ENCODE measurements at regions of chr2 and their contacts with region 1.

Region 1: DNA sequence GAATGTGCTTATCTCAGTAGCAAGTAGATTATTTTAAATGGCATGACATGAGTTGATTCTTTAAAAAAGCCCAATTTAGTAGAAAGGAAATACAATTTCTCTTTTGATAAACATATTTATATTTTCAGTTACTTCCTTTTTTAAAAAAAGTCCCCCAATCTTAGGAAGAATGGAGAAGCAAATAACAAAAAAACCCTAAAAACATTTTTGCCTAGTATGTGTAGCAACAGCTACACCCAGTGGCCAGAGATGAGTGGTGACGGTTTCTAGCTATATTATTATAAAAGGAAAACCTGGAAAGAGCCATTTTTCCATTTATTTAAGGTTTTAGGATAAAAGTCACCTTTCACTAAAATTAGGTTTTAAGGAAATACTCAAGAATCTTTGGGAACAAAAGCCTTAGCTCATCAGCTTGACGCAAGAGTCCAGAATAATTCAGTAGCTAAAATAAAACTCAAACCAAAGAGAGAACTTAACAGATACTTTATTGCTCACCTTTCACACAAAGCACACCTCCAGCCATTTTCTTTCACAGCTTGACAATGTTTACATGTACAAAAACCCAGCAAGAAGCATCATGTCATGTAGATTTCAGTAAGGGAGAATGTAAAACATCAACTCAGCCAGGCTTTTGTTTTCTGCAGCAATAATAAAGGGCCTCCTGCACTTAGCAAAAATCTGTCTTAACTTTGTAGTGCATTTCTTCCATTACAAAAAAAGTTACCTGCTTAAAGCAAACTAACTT is 15.7 kb downstream of the FAM98A start:
- DNase-seq: peak; percentile 26
- ATAC-seq: peak; percentile 73
- H3K4me3 ChIP-seq: no peak overlapping the region
- H3K27ac ChIP-seq: 0 out of 2 replicates have a peak overlapping the region, but pooled peaks have one; percentile 6
- H3K4me1 ChIP-seq: peaks cover 3% of the 10 kb centered on the region; the same call in 1 of the 2 replicates
- H3K27me3 ChIP-seq: no peaks in the 10 kb centered on the region
- CTCF ChIP-seq: peak; percentile 72 to 85 (median 83)
- EP300 ChIP-seq: no peak
- POLR2A ChIP-seq: no peak
- RAD21 ChIP-seq: peak; percentile 96

Region 2: GRCh38 chr2:32946314-32947075 is 636.9 kb before region 1 on chr2 and contains the start of gene LTBP1:
- CTCF ChIA-PET with region 1: no interaction called
- POLR2A ChIA-PET with region 1: no interaction called
- RAD21 ChIA-PET with region 1: no interaction called
- SMC1A ChIA-PET with region 1: no interaction called
- in situ Hi-C with region 1: no loop called
- intact Hi-C with region 1: loop called (anchors 10 kb)
- DNase-seq: no peak
- ATAC-seq: peak; percentile 94
- H3K4me3 ChIP-seq: peak within 1 kb of the TSS; percentile 65
- H3K27ac ChIP-seq: no peak within 1 kb of the TSS
- H3K4me1 ChIP-seq: peaks cover 4% of the 10 kb centered on the region; the same call in 1 of the 2 replicates
- H3K27me3 ChIP-seq: peaks cover 0 to 6% of the 10 kb centered on the region in 2 experiments
- CTCF ChIP-seq: peak; percentile 64 to 81 (median 73)
- EP300 ChIP-seq: no peak
- POLR2A ChIP-seq: no peak
- RAD21 ChIP-seq: peak; percentile 60
- polyA plus RNA-seq, gene LTBP1: not detected

Region 3: DNA sequence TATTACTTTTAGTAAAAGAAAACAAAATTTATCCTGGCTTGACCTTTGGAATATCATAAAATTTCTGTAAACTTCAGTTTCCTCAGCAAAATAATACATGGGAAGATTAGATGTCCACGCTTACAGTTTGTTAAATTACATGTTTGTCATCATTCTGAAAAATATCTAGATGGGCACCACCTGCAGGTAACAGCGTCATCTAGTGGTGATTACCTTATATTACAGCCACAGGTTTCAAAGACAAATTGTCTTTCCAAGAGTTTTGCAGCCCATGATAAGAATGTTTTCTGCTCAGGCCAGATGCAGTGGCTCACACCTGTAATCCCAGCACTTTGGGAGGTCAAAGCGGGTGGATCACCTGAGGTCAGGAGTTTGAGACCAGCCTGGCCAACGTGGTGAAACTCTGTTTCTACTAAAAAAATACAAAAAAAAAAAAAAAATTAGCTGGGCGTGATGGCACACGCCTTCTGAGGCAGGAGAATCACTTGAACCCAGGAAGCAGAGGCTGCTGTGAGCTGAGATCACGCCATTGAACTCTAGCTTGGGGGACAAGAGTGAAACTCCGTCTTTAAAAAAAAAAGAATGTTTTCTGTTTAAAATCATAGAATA is 203.3 kb before region 1 on chr2:
- CTCF ChIA-PET with region 1: interaction called, 33 read pairs
- POLR2A ChIA-PET with region 1: no interaction called
- RAD21 ChIA-PET with region 1: interaction called, 13 read pairs
- SMC1A ChIA-PET with region 1: interaction called, 32 read pairs
- in situ Hi-C with region 1: no loop called
- intact Hi-C with region 1: loop called (anchors 10 kb)
- DNase-seq: no peak
- ATAC-seq: no peak
- H3K4me3 ChIP-seq: no peak overlapping the region
- H3K27ac ChIP-seq: no peak overlapping the region
- H3K4me1 ChIP-seq: no peaks in the 10 kb centered on the region
- H3K27me3 ChIP-seq: no peaks in the 10 kb centered on the region; a peak in 1 of 4 replicates
- CTCF ChIP-seq: peak; percentile 55 to 70 (median 61); a peak in 5 of 6 replicates
- EP300 ChIP-seq: no peak
- POLR2A ChIP-seq: no peak
- RAD21 ChIP-seq: peak; percentile 57

Region 4: DNA sequence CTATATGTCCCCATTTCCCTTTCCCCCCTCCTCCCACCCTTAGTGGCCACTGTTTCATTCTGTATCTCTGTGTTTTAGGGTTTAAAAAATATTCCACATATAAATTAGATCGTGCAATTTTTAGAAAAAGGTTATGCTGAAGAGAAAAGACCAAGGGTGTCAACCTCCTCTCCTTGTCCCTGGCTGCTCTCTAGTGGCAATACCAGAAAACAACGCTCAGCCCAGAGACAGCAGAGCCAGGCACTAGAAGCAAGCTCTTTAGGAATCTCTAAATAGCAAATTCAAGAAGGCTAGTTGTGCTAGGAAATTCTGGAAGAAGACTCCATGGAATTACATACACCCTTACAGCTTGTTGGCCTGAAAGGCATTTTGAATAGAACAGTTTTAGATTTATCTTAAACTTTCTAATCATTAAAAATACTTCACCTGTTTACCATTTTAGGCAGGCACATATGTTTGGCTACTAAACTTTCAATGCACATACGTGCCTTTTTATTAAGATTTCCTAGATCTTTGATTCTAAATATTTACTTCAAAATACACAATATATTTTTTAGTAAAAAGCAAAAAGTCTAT is 142.0 kb before region 1 on chr2:
- CTCF ChIA-PET with region 1: interaction called, 22 read pairs
- POLR2A ChIA-PET with region 1: no interaction called
- RAD21 ChIA-PET with region 1: interaction called, 23 read pairs
- SMC1A ChIA-PET with region 1: interaction called, 46 read pairs
- in situ Hi-C with region 1: no loop called
- intact Hi-C with region 1: no loop called
- DNase-seq: no peak
- ATAC-seq: peak; percentile 93
- H3K4me3 ChIP-seq: no peak overlapping the region
- H3K27ac ChIP-seq: no peak overlapping the region
- H3K4me1 ChIP-seq: no peaks in the 10 kb centered on the region
- H3K27me3 ChIP-seq: no peaks in the 10 kb centered on the region
- CTCF ChIP-seq: peak; percentile 59 to 64 (median 63)
- EP300 ChIP-seq: no peak
- POLR2A ChIP-seq: no peak
- RAD21 ChIP-seq: peak; percentile 81

Region 5: GRCh38 chr2:33497221-33497650 is 86.1 kb before region 1 on chr2:
- CTCF ChIA-PET with region 1: interaction called, 11 read pairs
- POLR2A ChIA-PET with region 1: no interaction called
- RAD21 ChIA-PET with region 1: interaction called, 5 read pairs
- SMC1A ChIA-PET with region 1: interaction called, 15 read pairs
- in situ Hi-C with region 1: no loop called
- intact Hi-C with region 1: no loop called
- DNase-seq: peak; percentile 92
- ATAC-seq: peak; percentile 62
- H3K4me3 ChIP-seq: peak overlapping the region; percentile 66
- H3K27ac ChIP-seq: peak overlapping the region; percentile 91
- H3K4me1 ChIP-seq: peaks cover 75% of the 10 kb centered on the region
- H3K27me3 ChIP-seq: no peaks in the 10 kb centered on the region
- CTCF ChIP-seq: no peak
- EP300 ChIP-seq: peak; percentile 84 to 86; a peak in 3 of 4 replicates
- POLR2A ChIP-seq: no peak
- RAD21 ChIP-seq: no peak

Region 6: GRCh38 chr2:33512112-33512511 is 71.3 kb before region 1 on chr2:
- CTCF ChIA-PET with region 1: no interaction called
- POLR2A ChIA-PET with region 1: no interaction called
- RAD21 ChIA-PET with region 1: no interaction called
- SMC1A ChIA-PET with region 1: no interaction called
- in situ Hi-C with region 1: no loop called
- intact Hi-C with region 1: no loop called
- DNase-seq: no peak
- ATAC-seq: no peak
- H3K4me3 ChIP-seq: no peak overlapping the region
- H3K27ac ChIP-seq: no peak overlapping the region
- H3K4me1 ChIP-seq: no peaks in the 10 kb centered on the region; the same call in 1 of the 2 replicates
- H3K27me3 ChIP-seq: no peaks in the 10 kb centered on the region
- CTCF ChIP-seq: no peak
- EP300 ChIP-seq: no peak
- POLR2A ChIP-seq: no peak
- RAD21 ChIP-seq: no peak

Region 7: DNA sequence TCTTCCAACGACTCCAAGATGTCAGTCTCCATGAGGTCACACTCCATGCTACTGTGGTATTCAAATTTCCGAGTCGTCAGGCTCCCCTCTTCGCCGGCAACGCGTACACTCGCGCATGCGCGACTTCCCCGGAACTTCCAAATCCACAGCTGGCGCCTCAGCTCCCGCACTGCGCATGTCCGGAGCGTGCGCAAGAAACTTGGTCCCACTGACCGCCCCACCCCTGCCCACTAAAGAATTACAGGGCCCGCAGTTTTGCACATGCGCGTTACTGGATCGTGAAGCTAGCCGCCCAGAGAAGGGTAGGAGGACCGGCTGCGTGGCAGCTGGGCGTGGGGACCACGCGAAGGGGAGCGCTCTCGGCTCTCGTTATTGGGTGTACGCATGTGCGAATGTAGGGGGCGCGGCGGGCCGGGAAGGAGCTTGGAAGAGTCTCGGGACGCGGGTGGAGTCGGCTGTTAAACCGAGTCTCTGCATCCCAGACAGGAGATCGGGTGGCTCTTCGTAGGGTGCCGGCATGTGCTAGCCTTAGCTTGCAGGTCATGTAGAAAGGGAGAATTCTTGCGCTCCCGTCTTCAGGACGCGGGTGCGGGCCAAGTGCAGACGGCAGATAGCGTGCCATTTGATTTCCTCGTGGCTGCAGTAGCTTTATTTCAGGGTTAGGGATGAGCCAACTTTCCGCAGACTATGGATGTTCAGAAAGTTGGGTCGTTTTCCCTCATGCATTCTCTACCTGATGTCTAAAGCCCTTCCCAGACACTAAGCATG is 16.0 kb after region 1 on chr2 and contains the start of gene FAM98A:
- CTCF ChIA-PET with region 1: interaction called, 34 read pairs
- POLR2A ChIA-PET with region 1: interaction called, 8 read pairs
- RAD21 ChIA-PET with region 1: interaction called, 26 read pairs
- SMC1A ChIA-PET with region 1: interaction called, 24 read pairs
- in situ Hi-C with region 1: no loop called
- intact Hi-C with region 1: no loop called
- DNase-seq: peak; percentile 96
- ATAC-seq: peak; percentile 92
- H3K4me3 ChIP-seq: peak within 1 kb of the TSS; percentile 94
- H3K27ac ChIP-seq: peak within 1 kb of the TSS; percentile 96
- H3K4me1 ChIP-seq: no peaks in the 10 kb centered on the region
- H3K27me3 ChIP-seq: no peaks in the 10 kb centered on the region
- CTCF ChIP-seq: peak in 2 of 3 experiments; percentile 1 to 10; a peak in 1 of 6 replicates
- EP300 ChIP-seq: 0 out of 4 replicates have a peak, but pooled peaks of 1 of the 2 experiments have one; percentile 14
- POLR2A ChIP-seq: peak; percentile 75
- RAD21 ChIP-seq: no peak
- polyA plus RNA-seq, gene FAM98A: 34.4 to 55.6 TPM

Region 8: DNA sequence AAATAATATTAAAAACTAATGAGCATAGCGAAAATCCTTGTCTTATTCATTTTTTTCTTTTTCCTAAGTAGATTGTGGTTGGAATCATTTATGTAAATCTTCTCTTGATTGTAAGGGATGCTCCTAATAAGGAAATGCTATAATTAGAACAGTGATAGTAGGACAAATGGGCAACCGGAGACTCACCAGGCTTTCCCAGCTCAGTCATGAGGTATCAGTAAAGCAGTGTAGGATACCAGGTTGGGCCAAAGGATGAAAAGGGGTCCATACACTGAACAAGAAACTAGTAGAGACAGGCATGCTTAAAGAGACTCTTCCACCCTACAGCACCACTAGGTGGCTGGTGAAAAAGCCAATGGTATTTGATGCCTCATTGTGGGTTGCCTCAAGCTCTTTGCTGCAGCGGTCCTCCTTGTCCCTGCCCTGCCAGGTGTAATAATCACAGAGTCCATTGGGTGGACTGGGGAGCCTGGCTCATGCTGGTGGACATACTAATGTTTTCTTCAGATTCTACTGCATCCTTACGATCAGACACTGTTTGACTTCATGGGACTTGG is 87.1 kb after region 1 on chr2:
- CTCF ChIA-PET with region 1: no interaction called
- POLR2A ChIA-PET with region 1: no interaction called
- RAD21 ChIA-PET with region 1: no interaction called
- SMC1A ChIA-PET with region 1: no interaction called
- in situ Hi-C with region 1: no loop called
- intact Hi-C with region 1: no loop called
- DNase-seq: no peak
- ATAC-seq: peak; percentile 74
- H3K4me3 ChIP-seq: no peak overlapping the region
- H3K27ac ChIP-seq: no peak overlapping the region
- H3K4me1 ChIP-seq: no peaks in the 10 kb centered on the region
- H3K27me3 ChIP-seq: no peaks in the 10 kb centered on the region; a peak in 1 of 4 replicates
- CTCF ChIP-seq: 0 out of 6 replicates have a peak, but pooled peaks of 1 of the 3 experiments have one; percentile 14
- EP300 ChIP-seq: no peak
- POLR2A ChIP-seq: no peak
- RAD21 ChIP-seq: no peak